Activated B cell treated with CpG ODN at 0.5 μM for 24 hours (primary cell): ENCODE measurements at regions of chr16 and their contacts with region 1.

Region 1: GRCh38 chr16:75148311-75149195 is at the start of gene ZFP1:
- DNase-seq: peak; percentile 97
- ATAC-seq: peak; percentile 86
- H3K4me3 Mint-ChIP-seq: peak within 1 kb of the TSS; percentile 89
- H3K27ac Mint-ChIP-seq: peak within 1 kb of the TSS; percentile 87
- H3K4me1 Mint-ChIP-seq: peaks cover 29% of the 10 kb centered on the region
- H3K27me3 Mint-ChIP-seq: no peaks in the 10 kb centered on the region
- CTCF ChIP-seq: no peak
- total RNA-seq, gene ZFP1: 15.4 and 18.5 TPM in 2 replicates

Region 2: GRCh38 chr16:74296432-74297144 is 852.0 kb before region 1 on chr16 and contains the start of gene PSMD7:
- CTCF ChIA-PET with region 1: no interaction called
- POLR2A ChIA-PET with region 1: no interaction called
- intact Hi-C with region 1: loop called (anchors 2 kb)
- DNase-seq: peak; percentile 89
- ATAC-seq: peak; percentile 94
- H3K4me3 Mint-ChIP-seq: peak within 1 kb of the TSS; percentile 87
- H3K27ac Mint-ChIP-seq: peak within 1 kb of the TSS; percentile 90
- H3K4me1 Mint-ChIP-seq: peaks cover 33% of the 10 kb centered on the region
- H3K27me3 Mint-ChIP-seq: no peaks in the 10 kb centered on the region
- CTCF ChIP-seq: no peak
- total RNA-seq, gene PSMD7: 86.1 and 91.8 TPM in 2 replicates

Region 3: DNA sequence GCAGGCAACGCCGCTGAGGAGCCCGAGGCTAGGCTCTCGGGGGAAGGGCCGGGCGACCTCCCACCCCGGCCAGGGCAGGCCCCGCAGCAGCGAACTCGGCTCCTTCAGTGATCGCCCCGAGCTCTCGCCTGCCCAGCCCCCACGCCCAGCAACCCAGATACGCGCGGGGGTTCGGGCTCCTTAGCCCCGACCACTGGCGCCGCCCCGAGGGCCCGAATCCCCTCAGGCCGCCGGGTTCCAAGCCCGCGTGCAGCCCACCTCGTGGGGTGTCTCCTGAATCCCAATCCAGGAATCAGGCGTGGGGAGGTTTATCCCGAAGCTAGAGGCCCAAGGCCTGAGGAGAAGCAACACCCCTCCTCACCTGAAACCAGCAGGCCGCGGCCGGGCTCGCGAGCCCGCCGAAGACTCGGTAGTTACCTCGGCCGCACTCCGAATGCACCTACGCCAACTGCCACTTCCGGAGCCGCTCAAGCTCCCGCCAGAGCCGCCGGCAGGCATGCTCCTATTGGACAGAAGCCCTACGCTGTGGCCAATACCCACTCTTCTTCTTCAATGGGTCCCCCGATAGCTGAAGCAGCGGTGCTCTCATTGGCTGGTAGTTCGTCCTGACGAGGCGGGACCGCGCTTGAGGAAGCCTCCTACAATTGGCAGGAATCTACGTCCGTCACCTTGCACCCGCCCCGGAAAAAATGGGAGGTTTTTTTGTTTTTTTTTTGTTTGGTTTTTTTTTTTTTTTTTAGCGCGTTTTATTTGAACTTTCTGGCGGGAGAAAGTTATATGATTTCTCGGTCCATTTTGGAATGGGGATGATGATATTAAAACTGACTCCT is 481.9 kb before region 1 on chr16 and contains the start of gene RFWD3:
- CTCF ChIA-PET with region 1: no interaction called
- POLR2A ChIA-PET with region 1: no interaction called
- intact Hi-C with region 1: loop called (anchors 1 kb)
- DNase-seq: peak; percentile 78
- ATAC-seq: peak; percentile 99
- H3K4me3 Mint-ChIP-seq: peak within 1 kb of the TSS; percentile 94
- H3K27ac Mint-ChIP-seq: peak within 1 kb of the TSS; percentile 90
- H3K4me1 Mint-ChIP-seq: peaks cover 38% of the 10 kb centered on the region
- H3K27me3 Mint-ChIP-seq: no peaks in the 10 kb centered on the region
- CTCF ChIP-seq: no peak
- total RNA-seq, gene RFWD3: 57.9 and 63.2 TPM in 2 replicates

Region 4: DNA sequence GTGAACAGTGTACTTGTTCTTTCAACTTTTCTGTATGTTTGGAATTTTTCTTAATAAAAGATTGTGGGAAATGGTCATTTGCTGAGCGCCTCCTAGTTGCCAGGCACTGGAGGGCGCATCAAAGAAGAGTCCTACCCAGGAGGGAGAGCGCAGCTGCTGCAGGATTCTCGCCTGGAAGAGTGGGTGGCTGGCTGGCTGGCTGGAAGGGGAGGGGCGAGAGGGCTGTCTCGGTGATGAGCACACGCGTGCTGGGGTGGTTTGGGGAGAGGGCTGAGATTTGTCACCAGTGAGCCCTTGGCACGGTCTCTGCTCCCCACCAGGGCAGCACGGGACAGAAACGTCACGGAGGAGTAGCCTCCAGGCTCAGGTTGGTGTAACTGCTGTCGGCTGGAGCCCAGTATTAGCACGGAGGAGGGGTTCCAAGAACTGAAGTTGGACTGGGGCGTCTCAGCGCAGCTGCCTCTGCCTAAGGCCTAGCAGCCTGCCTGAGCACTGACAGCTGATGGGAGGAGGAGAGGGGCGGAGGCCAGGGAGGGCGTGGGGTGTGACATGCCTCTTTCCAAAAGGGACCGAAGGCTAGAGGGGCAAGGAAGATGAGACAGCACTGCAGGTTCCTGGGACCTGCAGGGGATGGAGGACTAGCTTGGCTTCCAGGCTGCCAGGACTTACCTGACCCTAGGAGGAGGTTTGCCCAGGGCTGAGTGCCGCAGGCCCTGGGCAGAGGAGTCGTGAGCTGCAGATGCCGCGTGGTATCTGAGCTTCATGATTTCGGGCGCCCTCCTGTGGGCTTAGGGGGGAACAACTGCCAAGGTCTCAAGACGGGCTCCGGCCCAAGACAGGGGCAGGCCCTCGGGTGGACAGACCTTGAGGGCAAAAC is 37.7 kb before region 1 on chr16:
- CTCF ChIA-PET with region 1: interaction called, 3 read pairs
- POLR2A ChIA-PET with region 1: no interaction called
- intact Hi-C with region 1: loop called (anchors 2 kb)
- DNase-seq: peak; percentile 73
- ATAC-seq: peak; percentile 90
- H3K4me3 Mint-ChIP-seq: peak overlapping the region; percentile 54
- H3K27ac Mint-ChIP-seq: peak overlapping the region; percentile 30
- H3K4me1 Mint-ChIP-seq: peaks cover 41% of the 10 kb centered on the region
- H3K27me3 Mint-ChIP-seq: peaks cover 57% of the 10 kb centered on the region
- CTCF ChIP-seq: no peak

Region 5: DNA sequence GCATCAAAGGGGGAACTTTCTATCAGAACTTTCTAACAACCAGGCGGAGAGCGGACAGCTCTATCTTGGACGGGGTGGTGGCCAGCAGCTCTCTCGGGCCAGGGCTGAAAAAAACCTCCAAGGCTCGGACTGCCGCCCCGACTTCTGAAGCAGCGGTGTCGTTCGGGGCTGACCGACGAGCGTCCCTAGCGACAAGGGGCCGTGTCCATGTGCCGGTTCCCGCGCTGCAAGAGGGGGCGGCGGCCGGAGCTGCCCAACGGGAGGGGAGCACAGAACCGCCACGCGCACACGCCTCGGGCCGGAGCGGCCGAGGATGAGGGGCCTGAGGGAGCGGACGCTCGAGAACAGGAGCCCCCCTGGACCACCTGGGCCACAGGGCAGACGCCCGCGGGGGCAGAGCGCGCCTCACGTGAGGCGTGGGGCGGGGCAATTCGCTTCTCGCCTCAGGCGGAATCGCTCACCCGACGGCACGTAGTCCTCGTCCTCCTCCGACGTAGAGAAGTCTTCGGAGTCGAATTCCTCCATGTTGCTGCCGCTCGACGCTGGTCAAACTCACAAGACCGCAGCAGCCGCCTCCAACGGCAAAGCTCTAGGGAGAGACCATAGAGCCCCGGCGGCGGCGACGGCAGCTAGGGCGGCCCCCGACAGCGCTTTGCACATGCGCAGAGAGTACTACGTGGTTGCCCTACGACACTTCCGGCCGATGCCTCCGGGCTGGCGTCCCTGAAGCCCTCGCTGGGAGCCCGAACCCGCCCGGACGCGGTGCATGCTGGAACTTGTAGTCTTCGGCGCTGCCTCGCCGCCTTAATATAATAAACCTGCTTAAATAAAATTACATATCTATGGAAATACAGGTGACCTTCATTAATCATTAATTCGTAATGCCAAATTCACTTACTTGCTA is 284.5 kb after region 1 on chr16 and contains the start of gene CFDP1:
- CTCF ChIA-PET with region 1: no interaction called
- POLR2A ChIA-PET with region 1: interaction called, 3 read pairs
- intact Hi-C with region 1: loop called (anchors 1 kb)
- DNase-seq: peak; percentile 91
- ATAC-seq: peak; percentile 86
- H3K4me3 Mint-ChIP-seq: peak within 1 kb of the TSS; percentile 91
- H3K27ac Mint-ChIP-seq: peak within 1 kb of the TSS; percentile 88
- H3K4me1 Mint-ChIP-seq: peaks cover 19% of the 10 kb centered on the region
- H3K27me3 Mint-ChIP-seq: no peaks in the 10 kb centered on the region
- CTCF ChIP-seq: no peak
- total RNA-seq, gene CFDP1: 27.7 and 32.0 TPM in 2 replicates

Region 6: GRCh38 chr16:75555707-75556430 is 407.3 kb after region 1 on chr16 and contains the start of gene TMEM231:
- CTCF ChIA-PET with region 1: no interaction called
- POLR2A ChIA-PET with region 1: no interaction called
- intact Hi-C with region 1: loop called (anchors 2 kb)
- DNase-seq: peak; percentile 89
- ATAC-seq: peak; percentile 94
- H3K4me3 Mint-ChIP-seq: peak within 1 kb of the TSS; percentile 93
- H3K27ac Mint-ChIP-seq: peak within 1 kb of the TSS; percentile 89
- H3K4me1 Mint-ChIP-seq: peaks cover 10% of the 10 kb centered on the region
- H3K27me3 Mint-ChIP-seq: no peaks in the 10 kb centered on the region
- CTCF ChIP-seq: no peak
- total RNA-seq, gene TMEM231: 4.0 and 4.1 TPM in 2 replicates

Region 7: DNA sequence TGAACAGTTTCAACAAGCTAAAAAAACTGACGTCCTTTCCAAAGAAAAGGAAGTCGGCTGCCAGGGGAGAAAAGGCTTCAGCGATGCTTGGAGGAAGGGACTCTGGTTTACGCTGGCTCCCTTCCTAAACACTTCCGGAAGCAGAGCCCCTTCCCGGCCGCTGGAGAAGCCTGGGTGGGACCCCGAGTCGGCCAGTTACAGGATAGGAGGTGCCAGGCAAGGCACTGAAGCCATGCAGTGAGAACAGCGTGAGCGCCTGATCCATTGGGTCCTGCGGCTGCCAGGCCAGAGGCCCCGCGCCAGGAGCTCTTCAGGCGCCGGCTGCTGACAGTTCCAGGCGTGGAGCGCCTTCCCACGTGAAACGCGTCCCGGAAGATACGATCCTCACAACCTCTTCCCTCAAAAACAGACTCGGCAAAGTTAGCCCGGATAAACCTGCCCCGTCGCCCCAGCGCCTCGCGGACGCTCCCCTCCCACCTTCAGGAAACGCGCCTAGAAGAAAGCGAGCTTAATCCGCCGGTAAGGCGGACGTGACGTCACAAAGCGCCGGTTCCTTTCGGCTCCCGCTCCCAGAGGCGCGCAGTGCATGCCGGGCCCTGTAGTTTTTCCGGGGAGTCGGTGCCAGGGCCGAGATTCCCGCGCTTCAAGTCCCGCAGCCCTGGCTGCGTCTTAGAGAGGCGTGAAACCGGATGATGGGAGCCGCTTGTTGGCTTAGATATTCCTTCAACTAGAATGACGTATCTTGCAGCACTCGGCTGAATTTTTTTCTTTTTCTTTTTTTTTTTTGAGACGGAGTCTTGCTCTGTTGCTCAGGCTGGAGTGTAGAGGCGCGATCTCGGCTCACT is 474.4 kb after region 1 on chr16 and contains the start of gene ADAT1:
- CTCF ChIA-PET with region 1: no interaction called
- POLR2A ChIA-PET with region 1: no interaction called
- intact Hi-C with region 1: loop called (anchors 1 kb)
- DNase-seq: peak; percentile 93
- ATAC-seq: peak; percentile 97
- H3K4me3 Mint-ChIP-seq: peak within 1 kb of the TSS; percentile 98
- H3K27ac Mint-ChIP-seq: peak within 1 kb of the TSS; percentile 95
- H3K4me1 Mint-ChIP-seq: peaks cover 22% of the 10 kb centered on the region
- H3K27me3 Mint-ChIP-seq: no peaks in the 10 kb centered on the region
- CTCF ChIP-seq: no peak
- total RNA-seq, gene ADAT1: 52.7 and 57.2 TPM in 2 replicates

Region 8: GRCh38 chr16:75660726-75661302 is 512.3 kb after region 1 on chr16:
- CTCF ChIA-PET with region 1: no interaction called
- POLR2A ChIA-PET with region 1: no interaction called
- intact Hi-C with region 1: no loop called
- DNase-seq: no peak
- ATAC-seq: no peak
- H3K4me3 Mint-ChIP-seq: no peak overlapping the region
- H3K27ac Mint-ChIP-seq: no peak overlapping the region
- H3K4me1 Mint-ChIP-seq: peaks cover 1% of the 10 kb centered on the region
- H3K27me3 Mint-ChIP-seq: no peaks in the 10 kb centered on the region
- CTCF ChIP-seq: no peak